IMR-90 (cell line): ENCODE measurements at regions of chr10 and their contacts with region 1.

Region 1: DNA sequence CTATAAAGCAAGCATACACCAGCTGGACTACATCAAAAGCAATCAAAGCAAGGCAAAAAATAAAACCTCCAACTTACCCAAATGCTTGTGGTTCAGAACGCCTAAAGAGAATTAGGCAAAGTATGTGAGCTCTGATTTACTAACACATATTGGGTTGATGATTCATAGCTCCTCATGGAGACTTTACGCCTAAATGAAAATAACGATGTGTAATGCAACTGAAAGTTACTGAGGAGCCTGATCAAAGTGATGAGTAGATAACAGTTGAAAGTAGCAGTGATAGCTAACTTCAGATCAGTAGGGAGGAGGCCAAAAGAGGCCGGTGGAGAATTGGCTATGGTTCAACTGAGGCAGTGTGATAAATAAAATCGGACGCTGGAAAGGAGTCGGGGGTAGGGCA is 85.0 kb downstream of the MPP7 start:
- DNase-seq: peak; percentile 92
- ATAC-seq: peak; percentile 91
- H3K4me3 ChIP-seq: peak overlapping the region; percentile 3; the same call in 1 of the 2 replicates
- H3K27ac ChIP-seq: peak overlapping the region; percentile 48
- H3K4me1 ChIP-seq: peaks cover 3% of the 10 kb centered on the region
- H3K27me3 ChIP-seq: no peaks in the 10 kb centered on the region
- CTCF ChIP-seq: no peak
- POLR2A ChIP-seq: no peak
- RAD21 ChIP-seq: no peak

Region 2: DNA sequence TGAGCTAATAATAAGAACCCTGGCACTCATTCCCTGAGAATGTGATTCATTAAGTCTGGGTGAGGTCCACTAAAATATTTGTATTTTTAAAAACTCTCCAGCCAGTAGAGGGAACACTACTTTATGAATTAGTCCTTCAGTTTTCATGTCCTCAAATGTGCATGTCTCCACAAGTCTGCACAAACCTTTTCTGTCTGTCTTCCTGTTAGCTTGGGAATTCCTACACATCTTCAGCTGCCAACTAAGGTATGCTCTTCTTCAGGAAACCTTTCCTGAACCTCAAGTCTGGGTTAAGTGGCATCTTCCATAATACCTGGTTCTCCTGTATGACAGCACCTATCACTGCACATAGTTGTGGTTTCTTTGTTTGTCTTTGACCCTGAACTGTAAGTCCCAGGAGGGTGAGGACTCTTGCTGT is 352.6 kb before region 1 on chr10:
- CTCF ChIA-PET with region 1: no interaction called
- POLR2A ChIA-PET with region 1: interaction called, 13 read pairs
- dilution Hi-C with region 1: no loop called
- in situ Hi-C with region 1: no loop called
- intact Hi-C with region 1: no loop called
- DNase-seq: peak; percentile 23
- ATAC-seq: peak; percentile 62
- H3K4me3 ChIP-seq: no peak overlapping the region
- H3K27ac ChIP-seq: no peak overlapping the region
- H3K4me1 ChIP-seq: peaks cover 2% of the 10 kb centered on the region; the same call in 1 of the 2 replicates
- H3K27me3 ChIP-seq: no peaks in the 10 kb centered on the region
- CTCF ChIP-seq: peak; percentile 20; the same call in 1 of the 2 replicates
- POLR2A ChIP-seq: no peak
- RAD21 ChIP-seq: no peak

Region 3: GRCh38 chr10:28201410-28202400 is 16.1 kb before region 1 on chr10:
- CTCF ChIA-PET with region 1: no interaction called
- POLR2A ChIA-PET with region 1: no interaction called
- dilution Hi-C with region 1: no loop called
- in situ Hi-C with region 1: no loop called
- intact Hi-C with region 1: loop called (anchors 2 kb)
- DNase-seq: peak; percentile 65
- ATAC-seq: peak; percentile 83
- H3K4me3 ChIP-seq: no peak overlapping the region
- H3K27ac ChIP-seq: peak overlapping the region; percentile 33; the same call in 1 of the 2 replicates
- H3K4me1 ChIP-seq: peaks cover 8% of the 10 kb centered on the region
- H3K27me3 ChIP-seq: no peaks in the 10 kb centered on the region
- CTCF ChIP-seq: no peak
- POLR2A ChIP-seq: no peak
- RAD21 ChIP-seq: no peak